ENCODE measurements at regions of chr15 and their contacts with region 1.

Region 1: GRCh38 chr15:59492389-59493377 is 54.7 kb downstream of the FAM81A start:
- DNase-seq: peak; percentile 60
- ATAC-seq: peak; percentile 91 to 95

Region 2: GRCh38 chr15:58980351-58980939 is 512.2 kb before region 1 on chr15:
- intact Hi-C with region 1: loop called (anchors 5 to 10 kb)
- DNase-seq: no peak
- ATAC-seq: no peak

Region 3: DNA sequence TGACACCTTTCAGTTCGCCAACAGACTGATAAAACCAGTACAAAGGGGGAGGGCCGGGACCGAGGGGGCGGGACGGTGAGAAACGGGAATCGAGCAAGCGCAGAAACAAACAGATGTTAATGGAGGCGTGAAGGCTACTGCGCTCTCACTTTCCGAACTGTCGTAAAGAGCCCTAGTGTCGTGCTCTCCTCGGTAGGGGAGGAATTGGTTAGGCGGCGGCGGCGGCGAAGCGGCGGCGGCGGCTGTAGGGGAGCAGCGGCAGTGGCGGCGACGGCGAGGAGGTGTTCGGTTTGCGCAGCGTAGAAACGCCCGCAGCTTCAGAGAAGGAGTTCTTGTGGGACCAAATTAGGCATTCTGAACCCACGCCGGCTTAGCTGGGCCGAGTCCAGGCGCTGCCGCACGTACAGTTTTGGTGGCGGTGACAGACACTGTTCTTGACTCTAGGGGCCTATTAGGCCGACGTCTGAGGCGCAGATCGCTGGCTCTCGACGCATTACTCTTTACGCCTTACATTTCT is 505.1 kb before region 1 on chr15 and contains the start of gene RNF111:
- intact Hi-C with region 1: loop called (anchors 5 to 10 kb)
- DNase-seq: peak; percentile 91
- ATAC-seq: peak; percentile 98
- total RNA-seq, gene RNF111: 16.7 to 24.7 TPM

Region 4: GRCh38 chr15:59158701-59159034 is 334.0 kb before region 1 on chr15:
- intact Hi-C with region 1: loop called in 1 of 2 experiments (anchors 10 kb)
- DNase-seq: no peak
- ATAC-seq: no peak

Region 5: GRCh38 chr15:59174835-59175831 is 317.6 kb before region 1 on chr15:
- intact Hi-C with region 1: loop called in 1 of 2 experiments (anchors 5 kb)
- DNase-seq: peak; percentile 53
- ATAC-seq: peak; percentile 81 to 83

Region 6: GRCh38 chr15:59247364-59247763 is 245.3 kb before region 1 on chr15:
- intact Hi-C with region 1: loop called (anchors 5 to 10 kb)
- DNase-seq: peak; percentile 59
- ATAC-seq: peak; percentile 70 to 81

Region 7: GRCh38 chr15:59372352-59373211 is 120.1 kb before region 1 on chr15 and contains the start of gene MYO1E:
- intact Hi-C with region 1: loop called in 1 of 2 experiments (anchors 5 kb)
- DNase-seq: peak; percentile 87
- ATAC-seq: peak; percentile 96 to 98
- total RNA-seq, gene MYO1E: 32.1 to 49.5 TPM

Measured in left cardiac atrium (tissue), 4 donors.